CD8-positive, alpha-beta T cell (primary cell): ENCODE measurements at regions of chr1 and their contacts with region 1.

Region 1: GRCh38 chr1:117758444-117759316 is 152.8 kb downstream of the TENT5C start:
- DNase-seq: peak; percentile 38 to 81 (median 69)
- ATAC-seq: peak; percentile 87
- H3K4me3 ChIP-seq: peak overlapping the region; percentile 45 to 48
- H3K4me3 Mint-ChIP-seq: peak overlapping the region; percentile 79
- H3K27ac ChIP-seq: no peak overlapping the region
- H3K27ac Mint-ChIP-seq: no peak overlapping the region
- H3K4me1 ChIP-seq: no peaks in the 10 kb centered on the region
- H3K4me1 Mint-ChIP-seq: peaks cover 5% of the 10 kb centered on the region
- H3K27me3 ChIP-seq: no peaks in the 10 kb centered on the region
- H3K27me3 Mint-ChIP-seq: peaks cover 10% of the 10 kb centered on the region
- CTCF ChIP-seq: peak; percentile 86

Region 2: DNA sequence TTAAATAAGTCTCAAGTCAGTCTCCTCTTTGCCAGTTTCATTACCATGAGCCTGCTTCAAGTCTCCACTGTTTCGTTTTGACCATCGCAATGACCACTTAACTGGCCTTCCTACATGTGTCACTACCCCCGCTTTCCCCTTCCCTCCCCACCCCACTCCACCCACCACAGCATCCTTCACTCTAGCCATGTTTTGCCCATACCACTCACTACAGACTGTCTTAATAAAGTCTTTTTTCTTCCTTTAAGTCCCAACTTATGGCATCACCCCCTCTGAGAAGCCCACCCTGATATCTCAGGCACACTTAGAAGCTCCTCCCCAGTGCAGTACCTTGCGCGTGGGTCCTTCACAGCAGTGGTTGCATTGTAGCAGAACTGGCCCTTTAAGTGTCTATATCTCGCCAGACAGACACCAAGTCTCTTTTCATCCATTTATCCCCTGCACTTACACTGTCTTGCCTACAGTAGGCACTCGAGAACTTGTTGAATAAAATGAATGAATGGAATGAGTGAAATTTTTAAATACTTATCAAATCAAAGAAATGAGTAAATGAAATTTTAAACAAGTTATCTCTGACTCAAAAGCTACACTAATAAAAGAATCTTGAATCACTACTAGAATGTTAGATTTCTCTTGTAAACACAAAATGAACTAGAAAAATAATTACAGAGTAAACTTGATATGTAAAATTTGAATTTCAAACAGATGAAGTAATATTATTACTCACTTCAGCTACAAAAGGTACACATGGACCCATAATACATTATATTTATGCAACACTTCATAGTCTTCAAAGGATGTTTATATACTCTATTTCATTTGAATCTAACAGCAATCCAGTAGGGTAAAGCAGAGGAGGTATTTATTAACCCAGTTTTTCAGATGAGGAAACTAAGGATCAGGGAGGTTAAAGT is 446.2 kb before region 1 on chr1:
- CTCF ChIA-PET with region 1: interaction called, 3 read pairs
- POLR2A ChIA-PET with region 1: no interaction called
- intact Hi-C with region 1: loop called in 1 of 2 experiments (anchors 5 kb)
- DNase-seq: peak in 2 of 9 experiments; percentile 39 to 46
- ATAC-seq: peak; percentile 75
- H3K4me3 ChIP-seq: no peak overlapping the region
- H3K4me3 Mint-ChIP-seq: no peak overlapping the region
- H3K27ac ChIP-seq: no peak overlapping the region
- H3K27ac Mint-ChIP-seq: no peak overlapping the region
- H3K4me1 ChIP-seq: no peaks in the 10 kb centered on the region
- H3K4me1 Mint-ChIP-seq: no peaks in the 10 kb centered on the region
- H3K27me3 ChIP-seq: no peaks in the 10 kb centered on the region
- H3K27me3 Mint-ChIP-seq: no peaks in the 10 kb centered on the region
- CTCF ChIP-seq: peak; percentile 62

Region 3: DNA sequence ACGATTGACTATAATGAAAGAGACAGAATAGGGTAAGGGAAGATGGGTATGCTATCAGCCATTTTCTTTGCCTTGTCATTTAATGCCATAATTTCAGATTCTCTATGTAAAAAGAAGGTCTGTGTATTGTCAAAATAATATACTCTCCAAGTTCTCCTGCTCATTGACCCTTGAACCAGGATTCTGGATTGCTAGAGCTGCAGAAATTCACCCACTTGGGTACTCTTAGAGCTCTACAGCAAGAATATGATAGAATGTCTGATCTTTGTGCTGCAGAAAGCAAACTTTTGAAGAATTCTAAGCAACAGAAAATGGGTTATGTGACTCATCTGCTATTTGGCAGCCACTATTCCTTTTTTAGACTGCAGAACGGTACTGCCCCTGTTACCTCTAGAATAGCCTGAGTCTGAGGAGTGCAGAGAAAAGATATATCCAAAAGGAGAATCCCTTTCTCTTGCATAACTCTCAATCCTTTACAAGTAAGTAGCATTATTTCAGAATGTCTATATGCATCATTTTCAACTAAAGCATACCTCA is 231.0 kb before region 1 on chr1:
- CTCF ChIA-PET with region 1: interaction called, 214 read pairs
- POLR2A ChIA-PET with region 1: interaction called, 3 read pairs
- intact Hi-C with region 1: no loop called
- DNase-seq: no peak
- ATAC-seq: no peak
- H3K4me3 ChIP-seq: no peak overlapping the region
- H3K4me3 Mint-ChIP-seq: no peak overlapping the region
- H3K27ac ChIP-seq: no peak overlapping the region
- H3K27ac Mint-ChIP-seq: no peak overlapping the region
- H3K4me1 ChIP-seq: no peaks in the 10 kb centered on the region
- H3K4me1 Mint-ChIP-seq: no peaks in the 10 kb centered on the region
- H3K27me3 ChIP-seq: no peaks in the 10 kb centered on the region
- H3K27me3 Mint-ChIP-seq: no peaks in the 10 kb centered on the region
- CTCF ChIP-seq: no peak

Region 4: GRCh38 chr1:117605774-117606648 is 152.7 kb before region 1 on chr1 and contains the start of gene TENT5C:
- CTCF ChIA-PET with region 1: interaction called, 5 read pairs
- POLR2A ChIA-PET with region 1: interaction called, 5 read pairs
- intact Hi-C with region 1: loop called in 1 of 2 experiments (anchors 5 kb)
- DNase-seq: peak; percentile 96 to 99 (median 99)
- ATAC-seq: peak; percentile 91
- H3K4me3 ChIP-seq: peak within 1 kb of the TSS; percentile 91 to 93
- H3K4me3 Mint-ChIP-seq: peak within 1 kb of the TSS; percentile 100
- H3K27ac ChIP-seq: peak within 1 kb of the TSS; percentile 95
- H3K27ac Mint-ChIP-seq: peak within 1 kb of the TSS; percentile 97
- H3K4me1 ChIP-seq: peaks cover 16% of the 10 kb centered on the region
- H3K4me1 Mint-ChIP-seq: peaks cover 36% of the 10 kb centered on the region
- H3K27me3 ChIP-seq: no peaks in the 10 kb centered on the region
- H3K27me3 Mint-ChIP-seq: no peaks in the 10 kb centered on the region
- CTCF ChIP-seq: no peak
- total RNA-seq, gene TENT5C: 146 to 150 TPM

Region 5: DNA sequence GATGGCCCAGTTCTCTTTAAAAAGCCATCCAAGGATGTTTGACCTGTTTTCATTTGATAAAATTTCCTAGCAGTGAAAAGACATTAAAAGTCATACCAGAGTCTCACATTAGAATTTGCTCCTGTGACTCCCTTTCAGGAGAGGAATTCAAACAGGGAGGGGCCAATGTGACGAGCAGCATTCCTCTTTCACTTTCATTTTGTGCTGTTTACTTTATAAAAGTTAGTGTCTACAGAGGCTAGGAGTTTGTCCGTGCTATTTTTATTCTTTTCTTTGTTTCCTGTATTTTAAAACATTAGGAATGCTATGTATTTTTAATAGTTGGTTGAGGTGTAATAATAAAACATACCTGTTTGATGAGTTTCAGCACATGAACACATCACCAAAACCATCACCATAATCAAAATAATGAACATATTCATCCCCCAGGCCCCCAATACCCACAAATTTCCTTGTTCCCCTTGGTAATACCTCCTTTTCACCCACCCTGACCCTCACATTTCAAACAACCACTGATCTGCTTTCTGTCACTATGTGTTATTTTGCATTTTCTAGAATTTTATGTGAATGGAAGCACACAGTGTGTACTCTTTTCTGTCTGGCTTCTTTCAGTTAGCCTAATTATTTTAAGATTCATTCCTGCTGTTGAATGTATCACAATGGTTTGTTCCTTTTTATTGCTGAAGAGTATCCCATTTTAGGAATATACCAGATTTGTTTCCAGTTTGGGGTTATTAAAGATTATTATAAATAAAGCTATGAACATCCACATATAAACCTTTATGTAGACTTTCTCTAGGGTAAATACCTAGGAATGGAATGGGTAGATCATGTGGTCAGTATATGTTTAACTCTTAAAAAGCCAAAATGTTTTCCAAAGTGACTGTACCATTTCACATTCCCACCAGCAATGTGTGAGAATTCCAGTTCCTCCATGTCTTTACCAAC is 23.4 kb before region 1 on chr1:
- CTCF ChIA-PET with region 1: interaction called, 18 read pairs
- POLR2A ChIA-PET with region 1: no interaction called
- intact Hi-C with region 1: no loop called
- DNase-seq: peak in 4 of 9 experiments; percentile 25 to 77 (median 52)
- ATAC-seq: peak; percentile 62
- H3K4me3 ChIP-seq: peak overlapping the region; percentile 22 to 38
- H3K4me3 Mint-ChIP-seq: peak overlapping the region; percentile 88
- H3K27ac ChIP-seq: peak overlapping the region; percentile 26 to 76
- H3K27ac Mint-ChIP-seq: peak overlapping the region; percentile 97
- H3K4me1 ChIP-seq: peaks cover 4% of the 10 kb centered on the region
- H3K4me1 Mint-ChIP-seq: peaks cover 22% of the 10 kb centered on the region
- H3K27me3 ChIP-seq: no peaks in the 10 kb centered on the region
- H3K27me3 Mint-ChIP-seq: no peaks in the 10 kb centered on the region
- CTCF ChIP-seq: no peak

Region 6: GRCh38 chr1:117842240-117843170 is 83.8 kb after region 1 on chr1:
- CTCF ChIA-PET with region 1: no interaction called
- POLR2A ChIA-PET with region 1: no interaction called
- intact Hi-C with region 1: no loop called
- DNase-seq: no peak
- ATAC-seq: no peak
- H3K4me3 ChIP-seq: no peak overlapping the region
- H3K4me3 Mint-ChIP-seq: no peak overlapping the region
- H3K27ac ChIP-seq: no peak overlapping the region
- H3K27ac Mint-ChIP-seq: no peak overlapping the region
- H3K4me1 ChIP-seq: no peaks in the 10 kb centered on the region
- H3K4me1 Mint-ChIP-seq: no peaks in the 10 kb centered on the region
- H3K27me3 ChIP-seq: no peaks in the 10 kb centered on the region
- H3K27me3 Mint-ChIP-seq: no peaks in the 10 kb centered on the region
- CTCF ChIP-seq: no peak

Region 7: DNA sequence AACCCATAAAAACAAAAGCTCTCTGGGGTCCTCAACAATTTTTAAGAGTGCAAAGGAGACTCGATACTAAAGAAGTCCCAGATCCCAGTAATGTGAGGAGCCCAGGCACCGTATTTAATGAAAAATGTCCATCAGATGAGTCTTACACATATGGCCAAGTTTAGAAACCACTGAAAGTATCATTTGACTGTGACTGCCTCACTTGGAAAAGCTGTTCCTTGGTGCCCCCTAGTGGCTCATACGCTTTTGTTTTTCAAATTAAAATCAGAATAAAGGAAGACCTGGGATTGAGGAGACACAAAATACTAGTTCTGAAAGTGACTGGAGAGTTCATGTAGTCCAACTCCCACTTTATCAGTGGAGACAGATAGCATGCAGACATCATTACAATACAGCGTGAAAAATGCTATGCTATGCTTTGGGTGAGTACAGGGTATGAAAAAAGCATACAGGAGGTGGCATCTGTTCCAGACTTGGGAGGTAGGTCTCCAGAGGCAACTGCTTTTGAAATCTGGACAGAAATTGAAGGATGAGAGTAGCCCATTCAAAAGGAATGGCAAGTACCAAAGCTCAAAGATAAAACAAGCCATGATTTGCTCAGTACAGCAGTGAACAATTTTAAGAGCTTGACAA is 136.9 kb after region 1 on chr1:
- CTCF ChIA-PET with region 1: interaction called, 14 read pairs
- POLR2A ChIA-PET with region 1: no interaction called
- intact Hi-C with region 1: loop called in 1 of 2 experiments (anchors 10 kb)
- DNase-seq: peak; percentile 11 to 70 (median 54)
- ATAC-seq: peak; percentile 48
- H3K4me3 ChIP-seq: no peak overlapping the region
- H3K4me3 Mint-ChIP-seq: no peak overlapping the region
- H3K27ac ChIP-seq: no peak overlapping the region
- H3K27ac Mint-ChIP-seq: no peak overlapping the region
- H3K4me1 ChIP-seq: no peaks in the 10 kb centered on the region
- H3K4me1 Mint-ChIP-seq: peaks cover 4% of the 10 kb centered on the region
- H3K27me3 ChIP-seq: no peaks in the 10 kb centered on the region
- H3K27me3 Mint-ChIP-seq: no peaks in the 10 kb centered on the region
- CTCF ChIP-seq: peak; percentile 84